Dendritic cell treated with granulocyte-macrophage colony-stimulating factor and Interleukin-4, amounts not matched to agents 40 ng/mL and 50 ng/mL, for 4 days (primary cell): ENCODE measurements at regions of chr6 and their contacts with region 1.

Region 1: GRCh38 chr6:43883847-43884651 is 114.0 kb downstream of the VEGFA start:
- H3K4me3 Mint-ChIP-seq: peak overlapping the region; percentile 45
- H3K27ac Mint-ChIP-seq: peak overlapping the region; percentile 95
- H3K4me1 Mint-ChIP-seq: peaks cover 62% of the 10 kb centered on the region
- H3K27me3 Mint-ChIP-seq: peaks cover 6% of the 10 kb centered on the region

Region 2: GRCh38 chr6:43790025-43790523 is 94.0 kb before region 1 on chr6:
- intact Hi-C with region 1: no loop called
- H3K4me3 Mint-ChIP-seq: no peak overlapping the region
- H3K27ac Mint-ChIP-seq: no peak overlapping the region
- H3K4me1 Mint-ChIP-seq: peaks cover 34% of the 10 kb centered on the region
- H3K27me3 Mint-ChIP-seq: peaks cover 3% of the 10 kb centered on the region

Region 3: DNA sequence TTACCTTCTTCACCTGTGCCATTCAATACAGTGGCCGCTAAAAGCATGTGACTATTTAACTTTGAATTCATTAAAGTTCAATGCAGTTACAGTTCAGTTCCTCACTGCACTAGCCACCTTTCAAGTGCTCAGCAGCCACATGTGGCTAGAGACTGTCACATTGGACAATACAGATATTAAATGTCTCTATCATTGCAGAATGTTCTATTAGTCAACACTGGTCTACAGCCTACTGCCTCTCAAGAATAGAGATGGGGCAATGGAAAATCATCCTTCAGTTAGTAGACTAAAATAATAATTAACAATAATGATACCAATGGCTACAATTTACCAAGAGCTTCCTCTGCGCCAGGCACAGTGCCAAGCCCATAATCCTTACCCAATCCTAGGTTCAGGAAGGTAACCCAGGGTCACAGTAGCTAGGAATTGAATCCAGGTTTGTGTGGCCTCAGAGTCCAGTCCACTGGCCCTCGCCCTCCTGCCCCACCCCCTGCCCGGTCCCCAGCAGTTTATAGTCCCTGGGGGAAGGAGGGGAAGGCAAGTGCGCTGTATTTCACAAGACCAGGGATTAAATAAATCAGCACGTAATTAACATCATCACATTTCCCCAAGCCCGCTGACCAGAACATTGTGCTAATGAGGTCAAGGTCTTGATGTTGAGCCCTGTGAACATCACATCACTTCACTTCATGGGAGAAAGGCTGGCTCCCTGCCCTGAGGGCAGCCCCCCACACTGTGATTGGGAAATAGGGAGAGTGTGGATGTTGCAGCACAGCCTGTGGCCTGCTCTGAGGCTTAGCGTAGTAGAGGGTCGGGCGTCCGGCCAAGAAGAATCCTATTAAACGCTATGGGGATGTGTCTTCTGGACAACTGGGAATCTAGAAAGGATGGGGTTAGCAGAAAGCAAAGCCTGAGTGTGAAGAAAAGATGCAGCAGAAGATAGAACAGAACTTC is 33.2 kb after region 1 on chr6:
- intact Hi-C with region 1: loop called (anchors 5 kb)
- H3K4me3 Mint-ChIP-seq: no peak overlapping the region
- H3K27ac Mint-ChIP-seq: peak overlapping the region; percentile 55
- H3K4me1 Mint-ChIP-seq: peaks cover 61% of the 10 kb centered on the region
- H3K27me3 Mint-ChIP-seq: peaks cover 27% of the 10 kb centered on the region

Region 4: DNA sequence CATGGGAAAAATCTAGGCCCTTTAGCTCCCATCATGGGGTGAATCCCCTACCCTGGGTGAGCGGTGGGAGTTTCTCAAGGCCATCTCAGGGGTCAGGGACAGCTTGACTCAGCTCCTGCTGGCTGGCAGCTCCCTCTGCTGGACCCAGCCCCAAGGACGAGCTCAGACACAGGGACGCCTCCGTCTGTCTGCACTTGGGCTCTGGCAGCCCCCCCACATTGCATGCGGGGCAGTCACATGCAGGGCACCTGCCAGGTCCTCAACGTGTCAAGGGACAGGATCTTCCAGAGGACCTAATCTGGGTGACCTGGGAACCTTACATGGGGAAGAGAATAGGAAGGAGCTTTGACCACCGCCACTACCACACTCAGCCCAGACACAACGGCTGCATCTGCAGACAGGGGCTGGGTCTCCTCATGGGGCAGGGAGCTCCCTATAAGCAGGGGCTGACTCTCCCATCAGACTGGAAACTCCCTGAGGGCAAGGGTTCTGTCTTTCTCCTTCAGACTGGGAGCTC is 69.8 kb after region 1 on chr6:
- intact Hi-C with region 1: no loop called
- H3K4me3 Mint-ChIP-seq: no peak overlapping the region
- H3K27ac Mint-ChIP-seq: no peak overlapping the region
- H3K4me1 Mint-ChIP-seq: peaks cover 7% of the 10 kb centered on the region
- H3K27me3 Mint-ChIP-seq: peaks cover 29% of the 10 kb centered on the region

Region 5: DNA sequence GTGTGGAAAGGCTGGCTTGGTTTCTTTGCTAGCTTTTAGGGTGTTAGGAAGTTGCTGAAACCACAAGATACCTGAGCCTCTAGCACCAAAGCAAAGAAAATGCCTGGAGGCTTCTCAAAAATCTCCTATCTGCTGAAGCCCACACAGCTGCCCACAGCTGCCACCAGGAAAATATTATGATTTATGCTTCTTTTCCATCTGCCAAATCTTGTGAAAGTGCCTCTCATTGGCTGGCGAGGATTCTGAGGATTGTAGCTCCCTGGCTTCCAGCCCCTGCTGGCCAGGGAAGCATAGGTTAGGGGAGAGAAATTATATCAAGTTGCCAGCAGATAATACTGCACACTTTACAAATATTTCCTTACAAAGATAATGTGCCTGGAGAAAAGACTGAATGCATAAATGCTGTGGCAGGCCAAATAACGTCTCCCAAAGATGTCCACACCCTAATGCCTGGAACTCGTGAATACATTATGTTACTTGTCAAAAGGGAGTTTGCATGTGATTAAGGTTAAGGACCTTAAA is 144.8 kb after region 1 on chr6:
- intact Hi-C with region 1: no loop called
- H3K4me3 Mint-ChIP-seq: no peak overlapping the region
- H3K27ac Mint-ChIP-seq: no peak overlapping the region
- H3K4me1 Mint-ChIP-seq: peaks cover 11% of the 10 kb centered on the region
- H3K27me3 Mint-ChIP-seq: peaks cover 44% of the 10 kb centered on the region